MCF 10A (cell line): ENCODE measurements at regions of chr17 and their contacts with region 1.

Region 1: DNA sequence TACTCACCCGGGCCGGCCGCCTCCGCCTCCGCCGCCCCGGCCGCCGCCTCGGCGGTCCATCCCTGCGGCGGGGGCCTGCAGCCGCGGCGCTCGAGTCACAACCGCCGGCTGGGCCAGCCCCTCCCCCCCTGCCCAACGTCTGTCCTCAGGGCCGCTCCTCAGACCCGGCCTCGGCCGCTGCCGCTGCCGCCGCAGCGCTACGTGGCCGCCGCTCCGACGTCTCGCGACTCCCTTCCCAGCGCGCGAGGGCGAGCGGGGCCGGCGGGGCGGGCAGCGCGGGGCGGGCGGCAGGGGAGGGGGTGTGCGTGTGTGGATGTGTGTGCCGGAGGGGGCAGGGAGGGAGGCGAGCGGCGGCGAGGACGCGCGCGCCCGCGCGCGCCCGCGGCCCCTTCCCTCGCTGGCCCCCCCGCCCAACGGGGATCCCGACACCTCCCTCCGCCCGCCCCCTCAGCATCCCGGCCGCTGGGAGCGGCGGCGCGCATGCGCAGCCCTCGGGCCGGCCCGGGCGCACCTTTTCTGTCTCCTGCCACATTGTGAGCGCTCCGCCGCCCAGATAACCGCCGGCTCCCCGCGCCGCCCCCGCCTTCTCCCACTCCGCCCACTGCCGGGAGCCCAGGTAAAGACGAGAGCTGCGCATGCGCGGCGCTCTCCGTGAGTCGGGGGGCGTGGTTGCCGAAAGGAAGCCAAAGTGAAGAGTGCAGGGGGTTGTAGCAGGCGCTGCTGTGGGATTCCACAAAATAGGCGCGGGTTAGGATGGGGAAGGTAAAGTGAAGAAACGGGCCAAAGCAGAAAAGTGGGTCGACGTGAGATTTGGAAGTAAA is at the start of gene ZNF652:
- DNase-seq: peak; percentile 94
- H3K4me3 Mint-ChIP-seq: peak within 1 kb of the TSS; percentile 86
- H3K27ac Mint-ChIP-seq: peak within 1 kb of the TSS; percentile 69
- H3K4me1 Mint-ChIP-seq: peaks cover 38% of the 10 kb centered on the region
- H3K27me3 Mint-ChIP-seq: no peaks in the 10 kb centered on the region
- CTCF ChIP-seq: no peak
- total RNA-seq, gene ZNF652: 18.8 and 19.6 TPM in 2 replicates

Region 2: DNA sequence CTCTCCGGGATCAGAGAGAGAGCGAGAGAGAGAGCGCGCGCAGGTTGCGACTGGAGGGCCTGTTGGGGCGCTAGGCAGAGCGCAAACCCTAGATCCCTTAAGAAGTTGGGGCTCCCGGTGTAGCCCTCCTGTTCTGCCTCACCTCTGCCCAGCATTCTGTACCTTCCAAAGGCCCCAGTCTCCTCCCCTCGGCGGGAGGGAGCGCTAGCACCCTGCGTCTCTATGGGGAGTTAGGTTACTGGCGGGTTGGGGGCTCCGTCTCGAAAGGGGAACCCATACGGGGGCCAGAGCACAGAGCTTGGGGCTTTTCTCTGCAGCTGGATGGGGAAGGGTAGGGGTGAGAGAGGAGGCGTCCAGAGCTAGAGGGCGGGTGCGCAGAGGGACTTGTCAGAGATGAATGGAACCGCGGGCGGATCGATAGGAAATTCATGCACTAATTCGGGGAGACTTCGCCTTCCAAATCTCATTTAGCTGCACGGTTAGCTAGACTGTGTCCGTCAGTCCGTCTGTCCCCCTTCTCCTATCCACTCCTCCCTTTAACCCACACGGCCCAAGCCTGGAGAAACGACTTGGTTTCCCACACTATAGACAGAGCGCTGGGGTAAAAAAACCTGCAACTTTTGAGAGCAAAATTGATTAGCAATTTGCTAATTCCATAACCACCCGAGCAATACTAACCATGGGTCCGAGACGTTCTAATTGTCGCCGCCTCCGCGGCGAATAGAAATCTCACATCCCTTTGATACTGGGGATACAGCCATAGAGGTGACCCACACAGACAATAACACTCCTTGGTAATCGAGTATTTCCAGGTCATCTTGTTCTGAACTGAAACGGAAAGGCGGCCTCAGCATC is 783.3 kb before region 1 on chr17:
- CTCF ChIA-PET with region 1: no interaction called
- POLR2A ChIA-PET with region 1: no interaction called
- intact Hi-C with region 1: no loop called
- DNase-seq: no peak
- H3K4me3 Mint-ChIP-seq: peak overlapping the region; percentile 72
- H3K27ac Mint-ChIP-seq: peak overlapping the region; percentile 19
- H3K4me1 Mint-ChIP-seq: peaks cover 8% of the 10 kb centered on the region
- H3K27me3 Mint-ChIP-seq: peaks cover 22% of the 10 kb centered on the region
- CTCF ChIP-seq: no peak

Region 3: DNA sequence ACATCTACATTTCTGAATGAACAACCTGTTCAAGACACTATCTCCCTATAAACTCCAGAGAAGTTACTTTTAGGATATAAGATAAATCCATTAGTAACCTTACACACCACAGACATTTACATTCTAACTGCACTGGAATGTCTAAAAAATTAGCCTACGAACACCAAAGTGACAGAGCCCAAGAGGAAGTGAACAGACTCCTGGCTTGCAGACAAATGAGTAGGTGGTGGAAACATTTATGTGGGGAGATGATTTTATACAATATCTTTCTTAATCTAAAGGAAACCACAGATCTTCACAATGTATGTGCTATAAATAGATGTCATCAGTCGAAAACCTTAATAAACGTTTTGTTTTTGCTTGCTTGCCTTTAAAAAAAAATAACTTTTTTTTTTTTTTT is 18.8 kb before region 1 on chr17:
- CTCF ChIA-PET with region 1: no interaction called
- POLR2A ChIA-PET with region 1: interaction called, 15 read pairs
- intact Hi-C with region 1: no loop called
- DNase-seq: peak; percentile 36
- H3K4me3 Mint-ChIP-seq: no peak overlapping the region
- H3K27ac Mint-ChIP-seq: no peak overlapping the region
- H3K4me1 Mint-ChIP-seq: peaks cover 9% of the 10 kb centered on the region
- H3K27me3 Mint-ChIP-seq: no peaks in the 10 kb centered on the region
- CTCF ChIP-seq: no peak

Region 4: GRCh38 chr17:49349535-49349934 is 12.6 kb before region 1 on chr17:
- CTCF ChIA-PET with region 1: interaction called, 5 read pairs
- POLR2A ChIA-PET with region 1: interaction called, 24 read pairs
- intact Hi-C with region 1: no loop called
- DNase-seq: no peak
- H3K4me3 Mint-ChIP-seq: no peak overlapping the region
- H3K27ac Mint-ChIP-seq: peak overlapping the region; percentile 19
- H3K4me1 Mint-ChIP-seq: peaks cover 6% of the 10 kb centered on the region
- H3K27me3 Mint-ChIP-seq: no peaks in the 10 kb centered on the region
- CTCF ChIP-seq: no peak

Region 5: GRCh38 chr17:49399995-49400394 is 37.9 kb after region 1 on chr17:
- CTCF ChIA-PET with region 1: interaction called, 5 read pairs
- POLR2A ChIA-PET with region 1: interaction called, 3 read pairs
- intact Hi-C with region 1: loop called (anchors 5 kb)
- DNase-seq: no peak
- H3K4me3 Mint-ChIP-seq: no peak overlapping the region
- H3K27ac Mint-ChIP-seq: no peak overlapping the region
- H3K4me1 Mint-ChIP-seq: peaks cover 6% of the 10 kb centered on the region
- H3K27me3 Mint-ChIP-seq: no peaks in the 10 kb centered on the region
- CTCF ChIP-seq: no peak

Region 6: DNA sequence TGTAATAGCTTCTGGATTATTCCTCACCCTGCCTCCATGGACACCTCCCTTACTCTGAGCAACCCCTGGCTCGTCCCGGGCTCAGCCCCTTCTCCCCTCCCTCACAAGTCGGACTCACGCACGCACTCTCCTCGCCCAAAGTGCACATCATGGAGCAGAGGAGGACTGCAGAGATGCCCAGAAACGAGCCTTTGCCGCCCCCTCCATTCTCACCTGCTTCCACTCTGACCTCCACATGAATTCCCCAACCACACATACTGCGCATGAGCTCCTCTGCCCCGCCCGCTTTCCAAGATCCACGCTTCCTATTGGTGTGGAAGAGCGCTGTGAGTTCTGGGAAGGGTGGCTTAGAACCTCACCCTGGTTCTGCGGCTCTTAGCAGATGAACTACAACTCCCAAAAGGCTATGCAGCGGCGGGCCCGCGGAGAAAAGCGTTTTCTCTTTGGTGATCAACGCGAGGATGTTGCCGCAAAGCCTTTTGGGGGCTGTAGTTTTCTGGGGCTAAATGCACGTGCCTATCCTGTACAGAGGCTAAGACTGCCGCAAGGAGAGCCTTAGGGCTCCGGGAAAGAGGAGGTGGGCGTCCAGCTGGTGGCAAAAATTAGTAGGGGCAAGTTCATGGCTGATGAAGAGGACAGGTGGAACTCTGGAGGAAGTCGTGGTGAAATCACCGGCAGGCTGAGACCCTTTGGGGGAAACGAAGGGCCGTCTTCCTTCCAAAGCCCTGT is 52.7 kb after region 1 on chr17 and contains the start of gene PHB1:
- CTCF ChIA-PET with region 1: no interaction called
- POLR2A ChIA-PET with region 1: interaction called, 19 read pairs
- intact Hi-C with region 1: no loop called
- DNase-seq: peak; percentile 98
- H3K4me3 Mint-ChIP-seq: peak within 1 kb of the TSS; percentile 84
- H3K27ac Mint-ChIP-seq: peak within 1 kb of the TSS; percentile 78
- H3K4me1 Mint-ChIP-seq: peaks cover 6% of the 10 kb centered on the region
- H3K27me3 Mint-ChIP-seq: no peaks in the 10 kb centered on the region
- CTCF ChIP-seq: no peak
- total RNA-seq, gene PHB1: 122 and 134 TPM in 2 replicates

Region 7: GRCh38 chr17:49459401-49459984 is 97.4 kb after region 1 on chr17:
- CTCF ChIA-PET with region 1: no interaction called
- POLR2A ChIA-PET with region 1: no interaction called
- intact Hi-C with region 1: no loop called
- DNase-seq: no peak
- H3K4me3 Mint-ChIP-seq: no peak overlapping the region
- H3K27ac Mint-ChIP-seq: no peak overlapping the region
- H3K4me1 Mint-ChIP-seq: no peaks in the 10 kb centered on the region
- H3K27me3 Mint-ChIP-seq: peaks cover 86% of the 10 kb centered on the region
- CTCF ChIP-seq: no peak